ENCODE measurements at regions of chr12 and their contacts with region 1.

Region 1: GRCh38 chr12:120265473-120266179 is at the start of gene PXN:
- DNase-seq: peak; percentile 78 to 91
- H3K4me3 ChIP-seq: peak within 1 kb of the TSS; percentile 77 to 100
- H3K27ac ChIP-seq: peak within 1 kb of the TSS; percentile 90 to 96
- H3K4me1 ChIP-seq: peaks cover 0 to 39% (median 31%) of the 10 kb centered on the region in 4 donors
- H3K27me3 ChIP-seq: no peaks in the 10 kb centered on the region
- CTCF ChIP-seq: peak; percentile 86 to 87

Region 2: GRCh38 chr12:120199595-120200306 is 65.9 kb before region 1 on chr12:
- intact Hi-C with region 1: loop called (anchors 2 kb)
- DNase-seq: peak in 1 of 2 donors; percentile 74
- H3K4me3 ChIP-seq: peak overlapping the region; percentile 75 to 82
- H3K27ac ChIP-seq: peak overlapping the region; percentile 89 to 96
- H3K4me1 ChIP-seq: peaks cover 0 to 29% (median 23%) of the 10 kb centered on the region in 4 donors
- H3K27me3 ChIP-seq: no peaks in the 10 kb centered on the region
- CTCF ChIP-seq: no peak

Region 3: DNA sequence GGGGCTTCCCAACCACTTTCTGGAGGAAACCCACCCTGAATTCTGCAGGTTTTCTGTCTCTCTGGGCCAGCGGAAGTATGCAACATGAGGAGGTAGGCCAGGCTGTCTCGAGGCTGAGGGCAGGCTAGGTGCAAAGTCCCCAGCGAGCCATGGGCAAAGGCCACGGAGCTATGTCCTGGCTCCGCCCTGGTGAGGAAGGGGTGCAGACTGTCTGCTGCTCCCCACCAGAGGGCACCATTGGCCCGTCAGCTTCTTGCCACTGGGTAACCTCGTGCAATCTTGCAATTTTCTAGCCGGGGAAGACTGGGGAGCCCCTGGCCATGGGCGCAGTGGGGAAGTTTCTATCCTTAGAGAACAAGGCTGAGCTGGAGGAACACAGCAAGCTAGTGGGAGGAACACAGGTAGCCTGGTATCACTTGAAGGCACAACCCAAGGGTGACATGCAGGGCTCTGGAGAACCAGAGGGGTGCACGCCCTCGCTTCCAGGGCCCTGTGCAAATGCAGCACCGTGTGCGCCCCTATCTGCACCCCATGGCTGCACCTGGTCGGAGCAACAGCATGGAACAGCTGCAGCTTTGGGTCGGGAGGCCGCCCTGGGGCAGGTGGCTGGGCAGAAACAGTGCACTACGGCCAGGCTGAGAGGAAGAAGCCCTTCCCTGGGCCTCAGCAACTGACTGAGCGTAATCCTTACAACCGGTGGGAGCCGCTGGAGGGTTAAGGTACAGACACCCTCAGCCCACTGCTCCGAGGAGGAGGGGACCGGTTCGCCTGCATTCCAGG is 37.1 kb before region 1 on chr12:
- intact Hi-C with region 1: loop called (anchors 2 kb)
- DNase-seq: peak; percentile 77 to 90
- H3K4me3 ChIP-seq: no peak overlapping the region
- H3K27ac ChIP-seq: peak overlapping the region in 1 of 2 donors; percentile 90
- H3K4me1 ChIP-seq: peaks cover 27 to 83% (median 70%) of the 10 kb centered on the region in 4 donors
- H3K27me3 ChIP-seq: no peaks in the 10 kb centered on the region
- CTCF ChIP-seq: peak; percentile 93 to 96